ENCODE measurements at regions of chr2 and their contacts with region 1.

Region 1: DNA sequence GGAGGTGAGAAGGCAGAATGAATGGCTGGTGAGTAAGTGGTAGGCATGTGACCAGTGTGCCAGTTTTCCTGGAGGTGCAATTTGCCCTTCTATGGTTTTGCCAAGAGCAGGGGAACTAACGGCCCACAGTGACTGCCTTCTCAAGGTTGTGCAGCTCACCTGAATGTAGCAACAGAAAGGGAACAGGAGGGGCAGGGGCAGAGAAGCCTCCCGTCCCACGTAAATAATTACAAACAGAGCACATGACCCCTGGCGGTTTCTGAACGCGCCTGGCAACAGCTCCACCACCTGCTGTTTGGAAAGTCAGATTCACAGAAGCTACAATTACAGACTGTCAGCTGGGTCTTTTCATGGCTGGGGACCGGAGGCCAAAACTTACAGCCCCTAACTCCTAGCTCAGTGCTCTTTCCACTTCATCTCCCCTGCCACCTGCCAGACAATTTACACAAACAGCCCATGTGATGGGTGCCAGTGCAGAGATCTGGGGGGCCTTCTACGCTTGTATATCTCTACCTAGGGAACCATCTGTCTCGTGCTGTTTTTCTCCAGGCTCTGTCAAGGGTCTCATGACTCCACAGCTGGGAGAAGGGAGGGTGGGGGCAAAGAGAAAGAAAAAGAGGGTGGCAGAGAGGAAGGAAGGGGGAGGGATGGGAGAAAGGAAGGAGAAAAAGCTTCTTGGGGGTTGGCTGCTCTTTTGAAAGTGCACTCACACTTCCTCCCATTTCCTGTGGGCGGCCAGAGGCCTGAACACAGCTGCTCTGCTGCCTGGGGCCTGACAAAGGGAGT is 69.6 kb downstream of the POLR1A start:
- DNase-seq: peak; percentile 90
- H3K4me3 Mint-ChIP-seq: peak overlapping the region; percentile 79
- H3K27ac Mint-ChIP-seq: peak overlapping the region; percentile 95
- H3K4me1 Mint-ChIP-seq: peaks cover 64% of the 10 kb centered on the region
- H3K27me3 Mint-ChIP-seq: no peaks in the 10 kb centered on the region

Region 2: GRCh38 chr2:85707304-85707703 is 328.8 kb before region 1 on chr2:
- intact Hi-C with region 1: loop called (anchors 5 kb)
- DNase-seq: peak; percentile 94
- H3K4me3 Mint-ChIP-seq: no peak overlapping the region
- H3K27ac Mint-ChIP-seq: peak overlapping the region; percentile 61
- H3K4me1 Mint-ChIP-seq: peaks cover 56% of the 10 kb centered on the region
- H3K27me3 Mint-ChIP-seq: peaks cover 5% of the 10 kb centered on the region

Region 3: DNA sequence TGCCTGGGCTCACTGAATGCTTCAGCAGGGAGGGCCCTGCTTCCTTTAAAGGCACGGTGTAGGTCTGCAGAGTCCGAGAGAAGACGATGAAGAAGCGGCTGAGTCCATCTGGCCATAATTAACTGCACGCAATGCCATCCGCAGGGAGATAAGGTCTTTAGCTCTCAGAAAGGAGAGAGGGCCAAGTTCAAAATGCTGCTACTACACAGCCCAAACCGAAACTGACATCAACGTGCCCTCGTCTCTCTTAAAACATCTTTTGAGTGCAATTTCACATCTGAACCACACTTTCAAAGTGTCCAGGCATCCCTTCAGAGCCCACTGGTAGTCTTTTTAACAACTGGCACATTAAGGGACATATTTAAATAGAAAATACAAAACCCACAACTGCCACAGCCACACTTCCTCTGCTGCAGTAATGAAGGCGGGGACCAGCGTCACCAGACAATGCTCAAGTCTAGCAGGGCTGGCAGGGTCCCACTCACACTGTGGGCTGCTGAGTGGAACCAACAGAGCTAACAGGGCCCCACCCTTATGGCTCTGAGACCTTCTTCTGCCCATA is 183.1 kb before region 1 on chr2:
- intact Hi-C with region 1: loop called (anchors 2 kb)
- DNase-seq: peak; percentile 88
- H3K4me3 Mint-ChIP-seq: peak overlapping the region; percentile 76
- H3K27ac Mint-ChIP-seq: peak overlapping the region; percentile 97
- H3K4me1 Mint-ChIP-seq: peaks cover 61% of the 10 kb centered on the region
- H3K27me3 Mint-ChIP-seq: no peaks in the 10 kb centered on the region

Region 4: DNA sequence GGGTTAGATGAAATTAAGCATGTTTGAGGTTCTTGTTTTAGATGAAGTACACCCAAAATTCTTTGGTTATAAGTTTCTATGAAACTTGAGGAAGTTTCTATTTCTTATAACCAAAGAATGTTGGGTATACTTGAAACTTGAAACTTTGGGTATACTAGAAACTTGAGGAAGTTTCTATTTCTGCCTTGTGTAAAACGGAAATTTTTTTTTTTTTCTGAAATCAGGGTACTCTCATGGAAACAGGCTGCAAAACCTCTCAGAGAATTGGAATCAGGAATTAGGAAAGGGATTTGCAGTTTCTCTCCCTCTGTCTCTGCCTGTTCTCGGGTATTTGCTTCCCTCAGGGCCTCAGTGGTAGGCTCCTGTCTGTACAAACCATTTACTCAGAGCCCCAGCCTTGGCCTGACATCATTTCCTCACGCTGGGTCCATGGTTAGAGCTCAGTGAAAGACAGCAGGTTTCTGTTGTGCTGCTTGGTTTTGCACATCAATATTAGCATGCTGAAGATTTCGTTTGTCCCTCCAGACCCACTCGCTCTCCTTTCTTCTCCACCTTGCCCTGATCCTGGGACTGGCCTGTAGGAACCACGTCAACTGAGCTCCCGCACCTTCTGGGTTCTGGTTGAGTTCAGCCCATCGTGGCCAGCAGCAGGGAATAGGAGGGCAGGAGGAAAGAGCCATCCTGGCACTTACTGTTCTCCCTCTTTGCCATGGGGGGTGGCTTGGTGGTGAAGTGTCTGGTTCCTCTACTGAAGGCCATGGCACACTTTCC is 36.8 kb before region 1 on chr2:
- intact Hi-C with region 1: loop called (anchors 1 kb)
- DNase-seq: peak; percentile 88
- H3K4me3 Mint-ChIP-seq: peak overlapping the region; percentile 56
- H3K27ac Mint-ChIP-seq: peak overlapping the region; percentile 83
- H3K4me1 Mint-ChIP-seq: peaks cover 63% of the 10 kb centered on the region
- H3K27me3 Mint-ChIP-seq: no peaks in the 10 kb centered on the region

Region 5: DNA sequence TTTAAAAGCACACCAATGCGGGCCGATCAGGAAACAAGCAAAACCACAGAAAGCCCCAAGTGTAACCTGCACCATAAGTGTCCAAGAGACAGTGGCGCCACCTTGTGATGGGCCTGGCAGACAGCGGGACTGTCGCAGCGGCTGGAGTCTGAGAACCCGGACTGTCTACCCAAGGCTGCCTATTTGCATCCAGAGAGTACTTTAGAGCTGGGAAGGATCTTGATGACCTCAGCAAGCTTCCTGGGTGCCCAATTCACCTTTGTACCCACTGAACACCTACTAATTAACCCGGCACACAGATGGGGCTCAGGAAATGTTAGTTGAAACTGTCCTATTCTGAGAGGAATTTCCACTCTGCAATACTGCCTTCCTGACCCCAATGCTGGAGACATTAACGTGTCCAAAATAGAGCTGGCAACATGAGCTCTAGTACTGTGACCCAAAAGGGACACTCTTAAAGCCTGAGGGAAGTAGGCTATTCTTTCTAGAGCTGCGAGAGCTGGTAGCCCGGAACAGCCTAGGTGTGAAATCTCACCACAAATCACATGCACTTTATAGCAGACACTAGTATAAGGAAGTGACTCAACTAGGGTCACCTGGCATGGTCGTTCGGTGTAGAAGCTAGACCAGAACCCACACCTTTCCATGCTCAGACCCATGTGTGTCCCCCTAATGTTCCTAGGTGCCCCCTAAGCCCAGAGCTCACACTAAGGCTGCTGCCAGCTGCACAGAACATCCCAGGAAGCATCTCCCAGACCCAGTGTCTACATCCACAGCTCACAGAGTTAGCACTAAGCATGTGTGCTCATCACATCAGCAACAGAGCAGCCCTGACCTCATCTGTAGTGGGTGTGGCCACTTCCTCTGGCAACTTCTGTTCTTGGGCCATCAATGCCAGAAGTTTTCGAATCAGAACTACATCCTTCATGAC is 44.2 kb after region 1 on chr2:
- intact Hi-C with region 1: loop called (anchors 2 kb)
- DNase-seq: peak; percentile 95
- H3K4me3 Mint-ChIP-seq: no peak overlapping the region
- H3K27ac Mint-ChIP-seq: peak overlapping the region; percentile 70
- H3K4me1 Mint-ChIP-seq: peaks cover 41% of the 10 kb centered on the region
- H3K27me3 Mint-ChIP-seq: no peaks in the 10 kb centered on the region